OCI-LY7 (cell line): ENCODE measurements at regions of chr6 and their contacts with region 1.

Region 1: GRCh38 chr6:70270287-70271005 is 32.4 kb downstream of the COL9A1 start:
- DNase-seq: no peak
- H3K4me3 ChIP-seq: no peak overlapping the region
- H3K27ac ChIP-seq: no peak overlapping the region
- H3K4me1 ChIP-seq: no peaks in the 10 kb centered on the region
- CTCF ChIP-seq: no peak

Region 2: DNA sequence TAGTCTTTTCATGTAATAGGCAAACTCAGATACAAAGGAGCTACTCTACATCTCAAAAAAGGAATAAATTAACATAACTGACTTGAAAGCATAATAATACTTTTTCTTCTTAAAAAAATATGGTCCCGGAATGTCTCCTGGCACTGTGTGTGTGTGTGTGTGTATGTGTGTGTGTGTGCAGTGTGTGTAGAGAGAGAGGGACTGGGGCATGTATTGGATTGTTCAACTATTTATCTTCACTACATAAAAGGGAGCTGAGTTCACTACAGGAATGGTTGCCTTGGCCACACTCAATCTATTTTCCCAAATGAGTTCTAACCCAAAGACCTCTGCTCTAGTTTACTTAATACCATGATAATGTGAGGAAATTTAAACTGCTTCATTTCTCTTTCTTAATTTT is 635.3 kb after region 1 on chr6:
- CTCF ChIA-PET with region 1: no interaction called
- POLR2A ChIA-PET with region 1: no interaction called
- intact Hi-C with region 1: loop called (anchors 5 kb)
- DNase-seq: no peak
- H3K4me3 ChIP-seq: no peak overlapping the region
- H3K27ac ChIP-seq: no peak overlapping the region
- H3K4me1 ChIP-seq: no peaks in the 10 kb centered on the region
- CTCF ChIP-seq: no peak